IMR-90 (cell line): ENCODE measurements at regions of chr17 and their contacts with region 1.

Region 1: GRCh38 chr17:55421179-55421934 is at the start of gene MMD:
- DNase-seq: no peak
- ATAC-seq: peak; percentile 52
- H3K4me3 ChIP-seq: peak within 1 kb of the TSS; percentile 79
- H3K27ac ChIP-seq: peak within 1 kb of the TSS; percentile 62
- H3K4me1 ChIP-seq: peaks cover 5% of the 10 kb centered on the region
- H3K27me3 ChIP-seq: peaks cover 2% of the 10 kb centered on the region; the same call in 1 of the 2 replicates
- CTCF ChIP-seq: no peak
- POLR2A ChIP-seq: no peak
- RAD21 ChIP-seq: no peak
- total RNA-seq, gene MMD: 7.0 and 11.9 TPM in 2 replicates

Region 2: GRCh38 chr17:55341432-55341831 is 79.9 kb before region 1 on chr17:
- CTCF ChIA-PET with region 1: no interaction called
- POLR2A ChIA-PET with region 1: no interaction called
- dilution Hi-C with region 1: no loop called
- in situ Hi-C with region 1: no loop called
- intact Hi-C with region 1: no loop called
- DNase-seq: peak; percentile 27
- ATAC-seq: no peak
- H3K4me3 ChIP-seq: no peak overlapping the region
- H3K27ac ChIP-seq: no peak overlapping the region
- H3K4me1 ChIP-seq: no peaks in the 10 kb centered on the region
- H3K27me3 ChIP-seq: peaks cover 12% of the 10 kb centered on the region
- CTCF ChIP-seq: no peak
- POLR2A ChIP-seq: no peak
- RAD21 ChIP-seq: no peak

Region 3: DNA sequence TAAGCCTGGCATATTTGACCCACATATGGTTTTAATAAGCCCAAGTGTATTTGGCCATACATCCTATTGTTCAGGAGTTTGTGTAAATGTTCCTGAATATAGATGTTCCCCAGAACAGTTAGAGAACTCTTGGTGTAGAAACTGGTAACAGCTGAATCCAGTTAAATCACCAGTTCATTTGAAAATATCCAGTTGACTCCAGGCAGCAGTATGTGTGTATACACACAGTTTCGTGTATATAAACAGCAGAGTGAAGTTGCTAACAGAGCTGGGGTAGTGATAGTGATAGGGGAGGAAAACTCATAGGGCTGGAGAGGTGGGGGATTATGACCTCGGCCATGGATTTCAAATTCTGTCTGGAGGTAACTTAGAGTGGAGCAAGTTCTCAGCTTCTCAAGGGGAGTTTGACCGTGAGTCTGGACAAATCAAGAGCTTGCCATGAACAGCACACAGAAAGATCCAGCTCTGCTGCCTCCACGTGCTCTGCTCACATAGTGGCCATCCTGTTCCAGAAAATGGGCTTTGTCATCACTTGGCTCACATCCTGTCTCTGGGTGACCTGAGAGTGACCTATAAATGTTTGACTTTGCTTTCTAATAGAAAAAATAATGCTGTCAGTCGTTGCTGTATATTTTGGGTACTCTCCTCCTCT is 30.9 kb after region 1 on chr17:
- CTCF ChIA-PET with region 1: no interaction called
- POLR2A ChIA-PET with region 1: no interaction called
- dilution Hi-C with region 1: no loop called
- in situ Hi-C with region 1: no loop called
- intact Hi-C with region 1: loop called (anchors 2 kb)
- DNase-seq: peak; percentile 81
- ATAC-seq: peak; percentile 50
- H3K4me3 ChIP-seq: no peak overlapping the region
- H3K27ac ChIP-seq: peak overlapping the region; percentile 97
- H3K4me1 ChIP-seq: peaks cover 27% of the 10 kb centered on the region
- H3K27me3 ChIP-seq: no peaks in the 10 kb centered on the region
- CTCF ChIP-seq: no peak
- POLR2A ChIP-seq: no peak
- RAD21 ChIP-seq: no peak

Region 4: DNA sequence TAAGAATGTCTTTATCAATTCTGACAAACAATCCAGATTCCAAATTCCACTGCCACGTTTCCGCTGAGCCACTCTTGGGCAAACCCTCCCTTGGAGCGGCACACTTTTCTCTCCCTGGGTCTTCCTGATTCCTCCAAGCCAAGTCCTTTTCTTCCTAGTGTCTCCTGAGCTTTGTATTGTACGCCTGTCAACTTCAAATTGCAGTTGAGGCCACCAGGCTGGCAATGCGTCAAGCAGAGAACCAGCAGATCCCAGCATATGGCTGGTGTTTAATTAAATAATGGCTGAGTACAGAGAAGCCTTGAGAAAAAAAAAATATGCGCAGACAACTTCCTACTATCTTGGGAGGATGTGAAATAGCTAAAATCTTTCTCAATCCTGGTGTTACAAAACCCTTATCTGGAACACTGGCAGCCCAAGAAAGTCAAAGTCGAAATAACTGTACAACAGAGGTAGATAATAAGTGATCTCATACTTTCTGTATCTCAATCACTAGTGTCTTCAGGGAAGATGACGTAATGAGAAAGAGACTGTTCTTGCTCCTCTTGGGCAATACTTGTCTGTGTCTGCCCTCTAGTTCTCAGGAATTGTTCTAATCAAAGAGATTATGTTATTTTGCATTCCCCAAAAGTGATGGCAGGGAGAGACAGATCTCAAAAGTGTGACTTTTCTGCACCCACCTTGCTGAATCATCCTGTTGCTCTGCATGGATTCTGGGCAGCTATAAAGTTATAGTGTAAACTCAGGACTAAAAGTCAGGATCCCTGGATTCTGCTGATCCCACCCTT is 74.9 kb after region 1 on chr17:
- CTCF ChIA-PET with region 1: no interaction called
- POLR2A ChIA-PET with region 1: no interaction called
- dilution Hi-C with region 1: no loop called
- in situ Hi-C with region 1: no loop called
- intact Hi-C with region 1: loop called (anchors 1 kb)
- DNase-seq: peak; percentile 67
- ATAC-seq: peak; percentile 67
- H3K4me3 ChIP-seq: no peak overlapping the region
- H3K27ac ChIP-seq: peak overlapping the region; percentile 57; the same call in 1 of the 2 replicates
- H3K4me1 ChIP-seq: peaks cover 2% of the 10 kb centered on the region; the same call in 1 of the 2 replicates
- H3K27me3 ChIP-seq: peaks cover 2% of the 10 kb centered on the region; the same call in 1 of the 2 replicates
- CTCF ChIP-seq: no peak
- POLR2A ChIP-seq: no peak
- RAD21 ChIP-seq: no peak

Region 5: DNA sequence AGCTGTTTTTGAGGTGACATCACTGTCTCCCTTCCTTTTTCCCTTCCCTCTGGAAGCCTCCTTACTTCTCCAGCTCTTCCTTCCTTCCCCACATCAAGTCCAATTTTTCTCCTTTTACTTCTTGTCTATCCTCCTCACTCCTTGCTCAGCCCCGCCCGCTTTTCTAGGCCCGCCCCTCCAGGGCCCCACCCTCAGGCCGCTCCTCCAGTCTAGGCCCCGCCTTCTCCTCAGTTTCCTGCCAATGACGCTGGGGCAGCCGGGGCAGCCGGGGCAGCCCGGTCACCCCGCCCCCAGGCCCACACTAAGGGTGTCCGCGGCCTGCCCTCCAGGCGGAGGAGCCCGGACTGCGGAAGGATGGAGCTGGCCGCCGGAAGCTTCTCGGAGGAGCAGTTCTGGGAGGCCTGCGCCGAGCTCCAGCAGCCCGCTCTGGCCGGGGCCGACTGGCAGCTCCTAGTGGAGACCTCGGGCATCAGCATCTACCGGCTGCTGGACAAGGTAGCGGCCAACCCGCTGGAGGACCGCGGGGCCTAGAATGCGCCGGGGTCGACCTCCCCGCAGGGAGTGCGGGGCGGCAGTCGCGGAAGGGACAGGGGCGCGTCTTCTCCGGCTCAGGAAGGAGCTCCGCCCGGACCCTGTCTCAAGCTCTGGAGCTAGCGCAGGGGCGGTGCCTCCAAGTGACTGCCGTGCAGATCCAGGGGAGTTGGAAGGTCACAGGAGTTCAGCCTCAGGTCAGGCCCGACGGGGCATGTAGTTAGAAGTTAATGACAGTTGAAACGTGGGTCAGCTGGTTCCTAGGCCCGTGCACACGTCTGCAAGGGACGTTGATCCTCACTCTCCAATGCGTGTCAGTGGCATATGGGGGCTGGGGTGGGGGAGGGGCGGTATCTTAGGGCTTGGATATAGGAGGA is 329.6 kb after region 1 on chr17 and contains the start of gene PCTP:
- CTCF ChIA-PET with region 1: no interaction called
- POLR2A ChIA-PET with region 1: no interaction called
- dilution Hi-C with region 1: no loop called
- in situ Hi-C with region 1: no loop called
- intact Hi-C with region 1: loop called (anchors 10 kb)
- DNase-seq: peak; percentile 87
- ATAC-seq: peak; percentile 100
- H3K4me3 ChIP-seq: peak within 1 kb of the TSS; percentile 87
- H3K27ac ChIP-seq: peak within 1 kb of the TSS; percentile 71
- H3K4me1 ChIP-seq: peaks cover 2% of the 10 kb centered on the region; the same call in 1 of the 2 replicates
- H3K27me3 ChIP-seq: no peaks in the 10 kb centered on the region
- CTCF ChIP-seq: peak; percentile 46
- POLR2A ChIP-seq: peak; percentile 78
- RAD21 ChIP-seq: peak; percentile 33
- total RNA-seq, gene PCTP: 12.9 and 18.1 TPM in 2 replicates